ENCODE measurements at regions of chr3 and their contacts with region 1.

Region 1: GRCh38 chr3:115692887-115693524 is 69.7 kb downstream of the GAP43 start:
- DNase-seq: peak; percentile 48 to 77
- H3K4me3 ChIP-seq: no peak overlapping the region
- H3K27ac ChIP-seq: no peak overlapping the region
- H3K4me1 ChIP-seq: no peaks in the 10 kb centered on the region
- H3K27me3 ChIP-seq: no peaks in the 10 kb centered on the region
- CTCF ChIP-seq: peak; percentile 86

Region 2: DNA sequence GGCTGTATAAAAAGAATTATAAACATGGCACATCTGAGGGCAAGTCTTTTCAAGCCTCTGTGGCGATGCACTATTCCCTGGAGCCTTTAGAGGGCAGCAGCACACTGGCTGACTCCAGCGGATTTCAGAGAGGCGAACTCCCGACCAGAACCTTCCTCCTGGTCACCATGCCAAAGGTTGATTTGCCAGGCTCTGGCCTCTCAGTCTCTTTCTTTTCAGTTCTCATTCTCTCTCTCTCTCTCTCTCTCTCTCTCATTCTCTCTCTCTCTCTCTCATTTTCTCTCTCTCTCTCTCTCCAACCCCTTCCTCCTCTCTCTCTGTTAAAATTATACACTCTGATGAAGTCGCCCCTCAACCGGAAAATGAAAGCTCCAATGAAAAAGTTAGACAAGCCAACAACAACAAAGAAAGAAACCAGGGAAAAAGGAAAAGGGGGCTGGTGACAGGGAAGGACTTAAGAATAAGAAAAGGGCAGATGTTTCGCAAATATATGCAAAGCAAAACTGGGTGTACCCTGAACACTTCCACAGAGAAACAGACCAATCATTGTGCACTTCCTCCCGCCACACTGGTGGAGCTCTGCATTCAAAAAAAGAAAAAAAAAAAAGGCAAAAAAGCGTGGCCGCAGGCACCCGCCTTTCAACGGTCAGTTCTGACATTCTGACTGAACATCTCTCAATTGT is 1309.0 kb before region 1 on chr3:
- CTCF ChIA-PET with region 1: interaction called, 3 read pairs
- POLR2A ChIA-PET with region 1: no interaction called
- intact Hi-C with region 1: loop called (anchors 1 kb)
- DNase-seq: peak; percentile 38 to 65
- H3K4me3 ChIP-seq: no peak overlapping the region
- H3K27ac ChIP-seq: no peak overlapping the region
- H3K4me1 ChIP-seq: no peaks in the 10 kb centered on the region; the same call in 1 of the 2 replicates
- H3K27me3 ChIP-seq: no peaks in the 10 kb centered on the region
- CTCF ChIP-seq: peak; percentile 93

Region 3: GRCh38 chr3:115040673-115041286 is 652.2 kb before region 1 on chr3:
- CTCF ChIA-PET with region 1: no interaction called
- POLR2A ChIA-PET with region 1: no interaction called
- intact Hi-C with region 1: loop called (anchors 2 kb)
- DNase-seq: peak; percentile 23 to 35
- H3K4me3 ChIP-seq: no peak overlapping the region
- H3K27ac ChIP-seq: no peak overlapping the region
- H3K4me1 ChIP-seq: no peaks in the 10 kb centered on the region
- H3K27me3 ChIP-seq: no peaks in the 10 kb centered on the region
- CTCF ChIP-seq: peak; percentile 69

Region 4: DNA sequence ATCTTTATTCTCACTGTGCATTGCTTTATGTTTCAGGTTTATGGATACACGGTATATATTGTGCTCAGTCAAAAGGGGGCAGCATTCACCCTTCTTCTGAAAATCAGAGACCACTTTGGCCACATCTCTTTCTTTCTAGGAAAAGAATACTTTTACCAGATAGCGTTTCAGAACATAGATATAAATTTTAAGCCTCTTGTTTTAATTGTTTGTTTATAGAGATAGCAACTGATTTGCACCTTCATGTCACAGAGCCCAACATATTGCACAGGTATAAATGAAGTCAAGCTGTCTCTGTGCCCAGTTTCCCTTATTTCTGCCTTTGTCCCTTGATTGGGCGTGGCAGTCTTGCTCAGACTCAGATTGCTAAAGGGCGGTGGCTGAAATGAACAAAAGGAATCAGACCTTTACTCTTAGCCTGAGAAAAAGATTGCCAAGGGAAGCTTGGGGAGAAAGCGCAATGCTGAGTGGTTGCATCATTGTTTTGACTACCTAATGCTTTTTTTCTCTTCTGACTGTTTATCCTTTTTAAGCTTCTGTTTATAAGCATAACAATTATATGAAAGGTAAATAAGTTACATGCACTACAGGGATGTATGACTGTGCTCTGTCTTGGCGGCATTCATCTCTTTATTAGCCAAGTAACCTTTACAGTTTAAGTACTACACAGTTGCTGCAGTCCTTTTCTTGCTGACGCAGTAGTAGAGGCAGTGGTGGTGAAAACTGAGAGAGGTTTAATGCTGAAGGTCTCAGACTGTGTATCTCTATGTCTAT is 475.1 kb before region 1 on chr3:
- CTCF ChIA-PET with region 1: no interaction called
- POLR2A ChIA-PET with region 1: no interaction called
- intact Hi-C with region 1: loop called (anchors 1 kb)
- DNase-seq: peak; percentile 40 to 51
- H3K4me3 ChIP-seq: no peak overlapping the region
- H3K27ac ChIP-seq: no peak overlapping the region
- H3K4me1 ChIP-seq: peaks cover 7% of the 10 kb centered on the region
- H3K27me3 ChIP-seq: no peaks in the 10 kb centered on the region
- CTCF ChIP-seq: peak; percentile 84

Region 5: GRCh38 chr3:115758076-115758763 is 65.2 kb after region 1 on chr3:
- CTCF ChIA-PET with region 1: no interaction called
- POLR2A ChIA-PET with region 1: no interaction called
- intact Hi-C with region 1: no loop called
- DNase-seq: no peak
- H3K4me3 ChIP-seq: no peak overlapping the region
- H3K27ac ChIP-seq: no peak overlapping the region
- H3K4me1 ChIP-seq: no peaks in the 10 kb centered on the region
- H3K27me3 ChIP-seq: peaks cover 10% of the 10 kb centered on the region
- CTCF ChIP-seq: no peak

Region 6: GRCh38 chr3:115783938-115784738 is 91.1 kb after region 1 on chr3:
- CTCF ChIA-PET with region 1: interaction called, 6 read pairs
- POLR2A ChIA-PET with region 1: no interaction called
- intact Hi-C with region 1: loop called (anchors 1 kb)
- DNase-seq: peak; percentile 83 to 95
- H3K4me3 ChIP-seq: peak overlapping the region; percentile 73
- H3K27ac ChIP-seq: peak overlapping the region; percentile 63
- H3K4me1 ChIP-seq: peaks cover 35% of the 10 kb centered on the region
- H3K27me3 ChIP-seq: no peaks in the 10 kb centered on the region
- CTCF ChIP-seq: peak; percentile 95

Region 7: GRCh38 chr3:115903843-115904242 is 210.8 kb after region 1 on chr3:
- CTCF ChIA-PET with region 1: no interaction called
- POLR2A ChIA-PET with region 1: no interaction called
- intact Hi-C with region 1: no loop called
- DNase-seq: no peak
- H3K4me3 ChIP-seq: no peak overlapping the region
- H3K27ac ChIP-seq: no peak overlapping the region
- H3K4me1 ChIP-seq: no peaks in the 10 kb centered on the region
- H3K27me3 ChIP-seq: no peaks in the 10 kb centered on the region
- CTCF ChIP-seq: no peak

Measured in PC-9 (cell line).